ENCODE measurements at regions of chr2 and their contacts with region 1.

Region 1: GRCh38 chr2:99154643-99155536 is at the starts of genes LIPT1 and TSGA10:
- DNase-seq: peak; percentile 95
- ATAC-seq: peak; percentile 96
- H3K4me3 Mint-ChIP-seq: peak within 1 kb of the TSS; percentile 79
- H3K27ac Mint-ChIP-seq: peak within 1 kb of the TSS; percentile 95
- H3K4me1 Mint-ChIP-seq: peaks cover 34% of the 10 kb centered on the region
- H3K27me3 Mint-ChIP-seq: no peaks in the 10 kb centered on the region
- total RNA-seq, gene LIPT1: 7.5 to 7.9 TPM
- total RNA-seq, gene TSGA10: 6.0 to 6.9 TPM

Region 2: DNA sequence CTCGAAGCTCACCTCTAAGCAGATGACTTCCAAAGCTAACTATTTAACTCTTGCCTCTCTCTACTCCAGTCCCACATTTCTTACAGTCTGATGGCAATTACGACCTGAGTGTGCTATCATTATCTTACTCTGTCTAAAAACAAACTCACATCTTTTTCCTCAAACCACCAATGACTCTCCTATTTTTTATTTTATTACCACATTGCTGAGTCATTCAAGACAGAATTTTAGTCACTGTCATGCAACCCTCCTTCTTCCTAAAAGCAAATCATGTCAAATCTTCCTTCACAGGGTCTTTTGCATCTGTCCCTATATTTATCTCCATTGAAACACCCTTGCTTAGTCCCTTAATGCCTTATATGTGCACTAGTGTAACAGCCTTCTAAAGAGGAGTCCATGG is 48.0 kb before region 1 on chr2:
- CTCF ChIA-PET with region 1: no interaction called
- POLR2A ChIA-PET with region 1: no interaction called
- DNase-seq: no peak
- ATAC-seq: no peak
- H3K4me3 Mint-ChIP-seq: no peak overlapping the region
- H3K27ac Mint-ChIP-seq: no peak overlapping the region
- H3K4me1 Mint-ChIP-seq: no peaks in the 10 kb centered on the region
- H3K27me3 Mint-ChIP-seq: no peaks in the 10 kb centered on the region

Region 3: DNA sequence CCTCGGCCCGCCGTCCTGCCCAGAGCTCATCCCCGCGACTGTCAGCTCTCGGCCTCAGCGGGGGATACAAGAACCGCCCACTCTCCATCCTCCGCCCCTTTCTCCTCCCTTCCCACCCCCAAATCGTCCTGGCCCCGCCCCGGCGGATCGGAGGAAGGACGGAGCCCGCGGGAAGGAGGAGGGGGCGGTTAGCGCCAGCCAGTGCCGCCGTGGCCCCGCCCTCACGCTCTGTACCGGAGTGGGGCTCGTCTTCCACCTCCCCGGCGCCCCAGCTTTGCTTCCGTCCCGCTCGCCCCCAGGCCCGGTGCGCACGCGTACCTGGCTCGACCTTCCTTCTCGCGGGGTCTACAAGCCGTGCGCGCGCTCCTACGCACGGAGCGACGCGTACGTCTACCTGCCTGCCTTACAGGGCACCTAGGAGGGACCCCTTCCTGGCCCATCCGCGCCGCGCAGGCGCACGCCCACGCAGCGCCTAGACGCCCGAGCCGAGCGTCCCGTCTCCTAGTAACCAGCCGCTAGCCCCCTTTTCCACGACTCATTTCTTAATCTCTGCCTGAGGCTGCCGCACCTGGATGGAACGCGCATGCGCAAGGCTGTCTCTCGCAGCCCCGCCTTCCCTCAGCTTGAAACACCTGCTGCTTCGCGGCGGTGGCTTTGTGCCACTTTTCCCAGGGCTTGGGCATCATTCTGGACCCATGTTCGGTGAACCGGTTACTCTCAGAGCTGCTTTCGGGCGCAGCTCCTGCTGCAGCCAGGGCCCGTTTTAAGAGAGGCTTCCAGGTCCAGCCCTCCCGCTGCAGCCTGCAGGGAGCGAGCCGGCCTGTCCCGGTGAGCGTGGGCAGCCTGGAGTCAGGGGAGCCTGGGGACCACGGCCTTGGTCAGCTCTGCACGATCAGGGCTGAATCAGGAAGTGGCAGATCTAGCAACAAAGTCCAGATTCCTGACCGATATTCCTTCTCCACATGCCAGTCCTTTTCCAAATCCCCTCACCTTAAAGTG is 13.5 kb before region 1 on chr2 and contains the start of gene C2orf15:
- CTCF ChIA-PET with region 1: interaction called, 21 read pairs
- POLR2A ChIA-PET with region 1: interaction called, 13 read pairs
- DNase-seq: peak; percentile 96
- ATAC-seq: peak; percentile 93
- H3K4me3 Mint-ChIP-seq: peak within 1 kb of the TSS; percentile 94
- H3K27ac Mint-ChIP-seq: peak within 1 kb of the TSS; percentile 94
- H3K4me1 Mint-ChIP-seq: peaks cover 21% of the 10 kb centered on the region
- H3K27me3 Mint-ChIP-seq: peaks cover 2% of the 10 kb centered on the region
- total RNA-seq, gene C2orf15: 0.37 to 0.86 TPM

Region 4: GRCh38 chr2:99169534-99169933 is 14.6 kb after region 1 on chr2:
- CTCF ChIA-PET with region 1: interaction called, 23 read pairs
- POLR2A ChIA-PET with region 1: no interaction called
- DNase-seq: no peak
- ATAC-seq: no peak
- H3K4me3 Mint-ChIP-seq: no peak overlapping the region
- H3K27ac Mint-ChIP-seq: no peak overlapping the region
- H3K4me1 Mint-ChIP-seq: peaks cover 12% of the 10 kb centered on the region
- H3K27me3 Mint-ChIP-seq: no peaks in the 10 kb centered on the region

Region 5: GRCh38 chr2:99180755-99181623 is 26.1 kb after region 1 on chr2 and contains the starts of genes MITD1 and MRPL30:
- CTCF ChIA-PET with region 1: interaction called, 14 read pairs
- POLR2A ChIA-PET with region 1: interaction called, 18 read pairs
- DNase-seq: peak; percentile 94
- ATAC-seq: peak; percentile 91
- H3K4me3 Mint-ChIP-seq: peak within 1 kb of the TSS; percentile 97
- H3K27ac Mint-ChIP-seq: peak within 1 kb of the TSS; percentile 92
- H3K4me1 Mint-ChIP-seq: peaks cover 41% of the 10 kb centered on the region
- H3K27me3 Mint-ChIP-seq: no peaks in the 10 kb centered on the region
- total RNA-seq, gene MITD1: 51.3 to 53.3 TPM
- total RNA-seq, gene MRPL30: 23.3 to 24.4 TPM

Measured in activated CD8-positive, alpha-beta T cell treated with anti-CD3 and anti-CD28 coated beads, Interleukin-2, amount 10 ng/mL, durations not matched to agents 7 days and 5 days (primary cell).